ENCODE measurements at regions of chr4 and their contacts with region 1.

Region 1: DNA sequence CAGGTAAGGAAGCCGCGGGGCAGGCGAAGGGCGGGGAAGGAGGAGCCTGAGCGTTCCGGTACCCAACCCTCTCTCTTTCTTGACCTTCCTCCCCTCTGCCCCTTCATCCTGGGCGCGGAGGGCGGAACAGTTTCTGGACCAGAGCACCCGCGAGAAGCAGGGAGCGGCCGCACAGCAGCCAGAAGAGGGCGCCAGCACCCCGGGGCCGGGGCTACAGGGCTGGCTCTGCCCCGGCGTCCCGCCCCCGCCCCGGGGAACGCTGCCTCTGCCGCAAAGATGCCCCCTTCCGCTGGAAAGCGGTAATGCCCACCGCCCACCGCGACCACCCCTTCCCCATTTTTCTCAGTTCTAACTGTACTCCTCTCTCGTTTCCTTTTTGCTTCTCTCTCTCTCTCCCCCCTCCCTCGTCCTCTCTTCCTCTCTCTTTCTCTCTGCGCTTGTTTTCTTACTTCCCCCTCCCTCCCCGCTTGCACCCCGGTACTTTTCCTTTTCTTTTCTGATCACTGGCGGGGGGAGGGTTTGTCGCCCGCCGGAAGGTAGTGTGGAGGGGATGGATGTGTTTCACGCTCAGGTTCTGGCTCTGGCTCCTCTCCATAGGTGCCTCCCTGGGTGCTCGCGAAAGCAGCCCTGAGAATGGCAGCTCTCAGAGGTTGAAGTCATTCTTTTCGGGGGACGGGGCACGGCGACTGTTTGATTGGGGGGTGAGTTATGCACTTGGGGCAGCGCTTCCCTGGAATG is 13.1 kb upstream of the PRDM8 start:
- DNase-seq: peak; percentile 78 to 82 (median 79)
- H3K4me3 ChIP-seq: peak overlapping the region; percentile 78 to 100 (median 79)
- H3K4me3 Mint-ChIP-seq: peak overlapping the region; percentile 99 to 100
- H3K27ac ChIP-seq: peak overlapping the region in 1 of 2 donors; percentile 74
- H3K27ac Mint-ChIP-seq: peak overlapping the region; percentile 38 to 93 (median 89)
- H3K4me1 ChIP-seq: peaks cover 28 to 34% of the 10 kb centered on the region in 2 donors
- H3K4me1 Mint-ChIP-seq: peaks cover 24% of the 10 kb centered on the region
- H3K27me3 ChIP-seq: peaks cover 14 to 48% of the 10 kb centered on the region in 2 donors
- H3K27me3 Mint-ChIP-seq: peaks cover 36 to 53% (median 38%) of the 10 kb centered on the region in 3 donors
- CTCF ChIP-seq: peak; percentile 98

Region 2: DNA sequence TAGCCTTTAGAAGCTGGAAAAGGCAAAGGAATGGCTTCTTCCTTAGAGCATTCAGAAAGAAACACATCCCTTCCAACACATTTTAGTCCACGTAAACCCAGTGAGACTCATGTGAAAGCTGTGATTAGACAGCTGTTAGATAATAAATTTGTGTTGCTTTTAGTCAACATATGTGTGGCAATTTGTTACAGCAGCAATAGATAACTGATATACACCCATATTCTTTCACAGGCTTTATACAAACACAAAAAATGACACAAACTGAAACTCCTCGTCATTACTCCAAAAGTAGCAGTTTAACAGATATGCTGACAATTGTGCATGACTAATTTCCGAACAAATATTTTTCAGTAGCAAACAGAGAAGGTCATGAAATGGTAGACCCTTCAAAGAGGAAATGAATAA is 176.5 kb before region 1 on chr4:
- intact Hi-C with region 1: no loop called
- DNase-seq: no peak
- H3K4me3 ChIP-seq: no peak overlapping the region
- H3K4me3 Mint-ChIP-seq: no peak overlapping the region
- H3K27ac ChIP-seq: peak overlapping the region in 1 of 2 donors; percentile 39
- H3K27ac Mint-ChIP-seq: no peak overlapping the region
- H3K4me1 ChIP-seq: peaks cover 13 to 21% of the 10 kb centered on the region in 2 donors
- H3K4me1 Mint-ChIP-seq: peaks cover 37% of the 10 kb centered on the region
- H3K27me3 ChIP-seq: no peaks in the 10 kb centered on the region
- H3K27me3 Mint-ChIP-seq: peaks cover 0 to 2% (median 0%) of the 10 kb centered on the region in 3 donors
- CTCF ChIP-seq: no peak

Region 3: DNA sequence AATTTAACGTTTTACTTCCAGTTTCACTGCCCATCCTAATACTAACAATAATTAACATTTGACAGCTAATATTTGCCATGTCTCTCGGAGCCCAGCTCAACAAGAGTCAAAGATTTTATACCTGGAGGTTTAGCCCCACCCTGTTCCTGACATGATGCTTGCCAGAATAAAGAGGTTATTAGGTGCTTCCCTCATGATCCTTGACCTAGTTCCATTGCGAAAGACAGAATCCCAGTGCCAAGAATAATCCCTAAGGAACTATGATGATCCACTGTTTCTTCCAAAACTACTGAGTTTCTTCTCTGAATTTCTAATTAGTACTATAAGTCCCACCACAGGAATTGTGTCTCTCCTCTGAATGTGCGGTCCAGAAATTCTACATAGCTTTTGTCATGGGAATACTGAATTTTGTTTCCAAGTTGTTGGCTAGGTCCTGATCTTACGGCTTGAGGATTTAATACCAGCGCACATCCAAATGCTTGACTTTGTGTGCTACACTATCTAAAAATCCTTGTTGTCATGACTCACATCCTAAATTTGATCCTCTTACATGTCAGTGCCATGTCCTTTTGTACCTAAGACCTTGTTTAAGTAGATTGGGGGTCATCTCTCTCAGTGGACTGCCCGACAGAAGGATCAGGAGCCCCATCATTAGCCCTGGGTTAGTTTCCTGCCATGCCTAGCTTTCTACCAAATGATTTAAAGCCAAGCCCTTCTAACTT is 134.2 kb before region 1 on chr4:
- intact Hi-C with region 1: loop called in 1 of 2 experiments (anchors 5 kb)
- DNase-seq: no peak
- H3K4me3 ChIP-seq: no peak overlapping the region
- H3K4me3 Mint-ChIP-seq: no peak overlapping the region
- H3K27ac ChIP-seq: peak overlapping the region in 1 of 2 donors; percentile 47
- H3K27ac Mint-ChIP-seq: peak overlapping the region in 4 of 7 donors; percentile 2 to 77 (median 68)
- H3K4me1 ChIP-seq: no peaks in the 10 kb centered on the region
- H3K4me1 Mint-ChIP-seq: peaks cover 15% of the 10 kb centered on the region
- H3K27me3 ChIP-seq: no peaks in the 10 kb centered on the region
- H3K27me3 Mint-ChIP-seq: no peaks in the 10 kb centered on the region
- CTCF ChIP-seq: no peak

Region 4: GRCh38 chr4:80072744-80073472 is 111.3 kb before region 1 on chr4 and contains the start of gene ANTXR2:
- intact Hi-C with region 1: loop called in 1 of 2 experiments (anchors 5 kb)
- DNase-seq: peak; percentile 92 to 94 (median 94)
- H3K4me3 ChIP-seq: peak within 1 kb of the TSS; percentile 61 to 93 (median 81)
- H3K4me3 Mint-ChIP-seq: peak within 1 kb of the TSS; percentile 98 to 100
- H3K27ac ChIP-seq: peak within 1 kb of the TSS; percentile 98 to 99
- H3K27ac Mint-ChIP-seq: peak within 1 kb of the TSS; percentile 98 to 100 (median 99)
- H3K4me1 ChIP-seq: peaks cover 65 to 69% of the 10 kb centered on the region in 2 donors
- H3K4me1 Mint-ChIP-seq: peaks cover 72% of the 10 kb centered on the region
- H3K27me3 ChIP-seq: no peaks in the 10 kb centered on the region
- H3K27me3 Mint-ChIP-seq: no peaks in the 10 kb centered on the region
- CTCF ChIP-seq: no peak
- polyA plus RNA-seq, gene ANTXR2: 15.4 to 69.6 (median 59.2) TPM

Region 5: GRCh38 chr4:80125252-80126177 is 58.7 kb before region 1 on chr4:
- intact Hi-C with region 1: loop called (anchors 5 to 10 kb)
- DNase-seq: peak; percentile 33 to 54 (median 42)
- H3K4me3 ChIP-seq: no peak overlapping the region
- H3K4me3 Mint-ChIP-seq: no peak overlapping the region
- H3K27ac ChIP-seq: no peak overlapping the region
- H3K27ac Mint-ChIP-seq: peak overlapping the region in 5 of 7 donors; percentile 14 to 80 (median 37)
- H3K4me1 ChIP-seq: peaks cover 16 to 25% of the 10 kb centered on the region in 2 donors
- H3K4me1 Mint-ChIP-seq: peaks cover 29% of the 10 kb centered on the region
- H3K27me3 ChIP-seq: no peaks in the 10 kb centered on the region
- H3K27me3 Mint-ChIP-seq: no peaks in the 10 kb centered on the region
- CTCF ChIP-seq: peak; percentile 76

Region 6: DNA sequence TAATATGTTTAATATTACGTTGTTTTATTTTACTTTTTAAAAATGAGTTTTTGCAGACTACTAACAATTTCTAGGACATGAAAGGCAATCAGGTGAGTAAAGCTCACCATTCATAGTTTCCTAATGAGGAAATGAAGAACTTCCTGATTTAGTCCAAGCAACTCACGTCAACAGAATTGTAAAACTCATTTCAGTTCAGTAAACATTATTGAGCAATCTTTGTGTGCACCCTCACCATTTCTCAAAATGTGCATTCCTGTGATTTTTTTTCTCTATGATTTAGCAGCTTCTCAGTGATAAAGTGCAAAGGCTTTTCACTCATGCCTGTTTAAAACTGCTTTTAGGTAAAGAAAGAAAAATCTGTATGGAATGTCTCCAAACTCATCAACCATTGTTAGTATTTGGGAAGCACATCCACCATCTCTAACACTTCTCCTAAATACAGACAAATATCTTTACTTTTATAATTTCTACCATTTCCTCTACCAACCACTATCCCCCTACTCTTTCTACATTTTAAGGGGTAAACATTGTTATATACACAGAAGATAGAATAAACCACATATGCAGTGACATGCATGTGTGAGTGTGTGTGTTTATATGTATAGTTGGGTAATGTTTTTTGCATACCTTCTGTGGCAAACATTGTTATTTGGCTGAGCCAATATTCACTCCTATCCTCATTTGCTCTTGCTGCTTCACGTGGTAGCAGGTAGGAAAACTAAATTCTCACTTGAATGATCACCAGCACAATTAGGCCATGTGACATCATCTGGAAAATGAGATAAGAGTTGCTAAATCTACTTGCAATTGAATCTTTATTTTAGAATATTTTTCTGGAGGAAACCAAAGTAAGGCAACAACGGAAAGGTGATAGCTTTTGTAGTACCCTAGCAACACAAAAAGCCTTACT is 41.6 kb before region 1 on chr4:
- intact Hi-C with region 1: loop called in 1 of 2 experiments (anchors 5 kb)
- DNase-seq: peak; percentile 65 to 94 (median 89)
- H3K4me3 ChIP-seq: no peak overlapping the region
- H3K4me3 Mint-ChIP-seq: no peak overlapping the region
- H3K27ac ChIP-seq: peak overlapping the region in 1 of 2 donors; percentile 68
- H3K27ac Mint-ChIP-seq: peak overlapping the region; percentile 75 to 95 (median 88)
- H3K4me1 ChIP-seq: peaks cover 48 to 57% of the 10 kb centered on the region in 2 donors
- H3K4me1 Mint-ChIP-seq: peaks cover 59% of the 10 kb centered on the region
- H3K27me3 ChIP-seq: no peaks in the 10 kb centered on the region
- H3K27me3 Mint-ChIP-seq: peaks cover 0 to 3% (median 0%) of the 10 kb centered on the region in 3 donors
- CTCF ChIP-seq: no peak